BJ (cell line): ENCODE measurements at regions of chr1 and their contacts with region 1.

Region 1: DNA sequence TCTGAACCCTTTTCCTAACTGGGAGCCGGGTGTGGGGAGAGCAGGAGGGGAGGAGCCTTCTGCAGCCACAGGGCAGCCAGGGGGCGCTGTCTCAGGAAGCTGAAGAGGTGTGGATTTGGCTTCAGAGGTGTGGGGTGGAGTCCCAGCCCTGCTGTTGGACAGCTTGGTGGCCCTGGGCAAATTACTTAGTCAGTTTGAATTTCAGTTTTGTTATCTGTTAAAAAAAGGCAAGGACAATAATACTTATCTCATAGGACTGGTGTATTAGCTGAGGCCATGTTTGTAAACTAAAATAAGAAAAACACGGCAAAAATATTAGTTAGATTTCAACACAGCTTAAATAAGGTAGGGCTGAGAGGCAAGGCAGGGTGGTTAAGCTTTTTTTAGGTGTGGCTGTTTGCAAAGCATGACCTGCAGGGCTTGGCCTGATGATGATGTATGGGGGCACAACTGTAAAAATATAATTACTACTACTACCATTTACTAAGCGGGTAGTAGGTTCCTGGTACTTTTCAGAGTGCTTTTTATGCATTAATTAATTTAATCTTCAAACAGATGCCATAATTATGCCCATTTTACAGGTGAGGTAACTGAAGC is 111.8 kb downstream of the PLXNA2 start:
- DNase-seq: peak; percentile 9
- H3K4me3 ChIP-seq: no peak overlapping the region
- H3K27me3 ChIP-seq: no peaks in the 10 kb centered on the region
- CTCF ChIP-seq: peak; percentile 94

Region 2: DNA sequence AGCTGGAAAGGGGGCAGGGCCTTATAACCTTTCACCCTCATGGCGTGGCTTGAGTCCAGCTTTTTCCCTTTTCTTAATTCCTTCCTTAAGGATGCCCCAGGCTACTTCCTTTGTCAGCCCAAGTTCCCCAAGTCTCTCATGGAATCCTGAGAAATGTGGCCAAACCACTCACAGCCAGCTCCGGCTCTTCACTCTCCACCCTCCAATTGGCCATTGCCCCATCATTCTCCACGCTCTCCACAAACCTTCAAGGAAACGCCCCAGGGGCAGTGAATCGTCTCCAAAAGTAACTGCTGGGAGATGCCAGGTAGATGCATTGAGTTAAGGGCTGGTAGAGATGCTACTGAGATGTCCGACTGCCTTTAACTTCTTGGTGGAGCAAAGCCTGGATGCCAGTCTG is 108.0 kb before region 1 on chr1:
- CTCF ChIA-PET with region 1: interaction called, 16 read pairs
- POLR2A ChIA-PET with region 1: no interaction called
- DNase-seq: no peak
- H3K4me3 ChIP-seq: no peak overlapping the region
- H3K27me3 ChIP-seq: peaks cover 2% of the 10 kb centered on the region
- CTCF ChIP-seq: no peak

Region 3: DNA sequence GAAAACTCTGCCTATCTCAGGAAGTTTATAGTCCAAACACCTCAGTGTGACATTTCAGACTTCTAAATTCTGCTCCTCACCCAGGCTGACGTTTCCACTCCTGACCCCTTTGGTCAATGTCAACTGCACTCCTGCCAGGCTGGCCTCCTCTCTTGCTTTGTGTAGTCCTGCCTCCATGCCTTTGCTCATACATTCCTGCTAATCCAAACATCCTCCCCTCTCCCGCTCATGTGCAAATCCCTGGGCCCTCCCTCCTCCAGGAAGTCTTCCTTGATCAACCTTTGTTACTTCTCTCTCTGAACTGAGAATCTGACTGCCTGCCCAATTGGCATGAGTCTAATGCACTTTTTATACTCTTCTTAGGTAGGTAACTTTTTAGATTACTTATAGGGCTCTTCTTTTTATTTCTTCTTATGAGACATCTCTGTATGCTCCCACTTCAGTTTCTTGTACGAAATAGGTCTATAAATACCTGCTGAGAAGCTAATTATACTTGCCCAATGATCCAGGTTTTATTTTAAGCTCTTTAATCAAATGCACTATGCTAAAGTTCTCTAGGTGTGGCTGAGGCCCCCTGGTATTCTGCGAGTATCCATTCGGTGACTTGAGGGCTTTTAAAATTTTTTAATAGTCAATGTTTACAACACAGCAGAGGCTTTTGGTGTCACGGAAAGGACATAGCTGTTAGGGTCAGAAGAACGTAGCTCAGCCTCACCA is 16.3 kb before region 1 on chr1:
- CTCF ChIA-PET with region 1: interaction called, 10 read pairs
- POLR2A ChIA-PET with region 1: no interaction called
- DNase-seq: no peak
- H3K4me3 ChIP-seq: no peak overlapping the region
- H3K27me3 ChIP-seq: no peaks in the 10 kb centered on the region
- CTCF ChIP-seq: no peak

Region 4: GRCh38 chr1:208150833-208151458 is 18.6 kb after region 1 on chr1:
- CTCF ChIA-PET with region 1: interaction called, 12 read pairs
- POLR2A ChIA-PET with region 1: no interaction called
- DNase-seq: no peak
- H3K4me3 ChIP-seq: no peak overlapping the region
- H3K27me3 ChIP-seq: no peaks in the 10 kb centered on the region
- CTCF ChIP-seq: no peak

Region 5: GRCh38 chr1:208233546-208233945 is 101.2 kb after region 1 on chr1:
- CTCF ChIA-PET with region 1: interaction called, 151 read pairs
- POLR2A ChIA-PET with region 1: no interaction called
- DNase-seq: no peak
- H3K4me3 ChIP-seq: no peak overlapping the region
- H3K27me3 ChIP-seq: no peaks in the 10 kb centered on the region
- CTCF ChIP-seq: no peak